Activated CD8-positive, alpha-beta T cell treated with anti-CD3 and anti-CD28 coated beads, Interleukin-2, amount 10 ng/mL, durations not matched to agents 7 days and 5 days (primary cell): ENCODE measurements at regions of chr2 and their contacts with region 1.

Region 1: GRCh38 chr2:178397002-178397605 is 53.9 kb downstream of the PRKRA start:
- DNase-seq: no peak
- ATAC-seq: peak; percentile 79
- H3K4me3 Mint-ChIP-seq: no peak overlapping the region
- H3K27ac Mint-ChIP-seq: no peak overlapping the region
- H3K4me1 Mint-ChIP-seq: peaks cover 4% of the 10 kb centered on the region
- H3K27me3 Mint-ChIP-seq: peaks cover 34% of the 10 kb centered on the region

Region 2: DNA sequence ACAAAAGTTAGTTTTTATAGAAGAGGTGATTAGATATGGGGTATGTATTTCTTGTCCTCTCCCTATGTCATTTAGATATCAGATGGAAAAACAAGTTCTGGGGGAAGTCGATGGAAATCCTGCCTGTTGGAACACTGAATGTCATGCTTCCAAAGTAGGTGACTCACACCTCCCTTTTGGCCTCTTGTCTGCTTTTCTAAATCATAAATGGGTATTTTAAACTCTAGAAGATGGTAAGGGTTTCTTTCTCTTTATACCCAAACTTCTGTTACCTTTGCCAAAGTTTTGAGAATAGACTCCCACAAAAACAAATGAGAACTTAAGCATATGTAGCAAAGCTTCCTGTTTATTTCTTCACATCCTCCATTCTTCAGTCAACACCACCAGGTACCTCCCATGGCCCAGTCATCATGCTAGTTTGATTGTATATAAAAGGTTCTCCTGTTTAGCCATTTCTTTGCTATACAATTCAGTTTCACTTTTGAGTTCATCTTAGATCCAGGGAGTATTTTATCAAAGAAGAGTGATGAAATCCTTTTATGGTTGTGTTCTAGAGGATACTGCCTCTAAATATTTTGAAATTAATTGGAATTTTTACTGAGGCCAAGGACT is 10.0 kb before region 1 on chr2:
- CTCF ChIA-PET with region 1: interaction called, 10 read pairs
- POLR2A ChIA-PET with region 1: no interaction called
- DNase-seq: no peak
- ATAC-seq: no peak
- H3K4me3 Mint-ChIP-seq: no peak overlapping the region
- H3K27ac Mint-ChIP-seq: no peak overlapping the region
- H3K4me1 Mint-ChIP-seq: peaks cover 6% of the 10 kb centered on the region
- H3K27me3 Mint-ChIP-seq: peaks cover 10% of the 10 kb centered on the region

Region 3: DNA sequence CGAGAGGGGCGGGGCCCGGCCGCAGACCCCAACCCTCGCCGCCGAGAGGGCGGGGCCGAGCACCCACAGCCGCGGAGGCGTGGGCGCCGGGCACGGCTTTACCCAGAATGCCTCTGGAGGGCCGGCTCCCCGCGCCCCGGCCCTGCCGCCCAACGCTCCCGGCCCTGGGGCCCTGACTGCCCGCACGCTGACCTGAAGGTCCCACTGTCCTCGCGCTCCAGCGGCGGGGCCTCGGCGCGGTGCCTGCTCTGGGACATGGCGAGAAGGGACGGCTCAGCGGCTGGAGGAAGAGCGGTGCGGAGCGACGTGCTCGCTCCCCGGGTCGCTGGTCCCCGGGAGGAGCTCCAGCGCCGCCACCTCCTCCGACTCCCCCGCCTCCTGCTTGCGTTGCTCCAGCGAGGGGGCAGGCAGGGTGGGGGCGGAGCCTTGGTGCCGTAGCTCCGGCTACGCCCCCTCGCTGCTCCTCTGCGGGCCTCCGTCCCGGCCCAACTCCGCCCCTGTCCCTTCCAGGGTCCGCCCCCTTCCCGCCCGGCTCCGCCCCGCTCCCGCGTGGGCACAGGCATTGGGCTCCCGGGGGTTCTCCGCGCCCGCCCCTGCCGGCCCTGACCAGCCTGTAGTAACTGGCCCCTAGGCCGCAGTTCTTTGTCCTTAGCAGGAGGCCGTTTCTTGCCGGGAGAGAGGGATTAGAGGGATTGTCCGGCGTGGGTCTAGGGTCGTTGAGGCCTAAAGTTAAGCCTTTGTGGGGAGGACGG is 53.8 kb after region 1 on chr2 and contains the starts of genes PJVK and PRKRA:
- CTCF ChIA-PET with region 1: interaction called, 10 read pairs
- POLR2A ChIA-PET with region 1: interaction called, 3 read pairs
- DNase-seq: peak; percentile 96
- ATAC-seq: peak; percentile 92
- H3K4me3 Mint-ChIP-seq: peak within 1 kb of the TSS; percentile 88
- H3K27ac Mint-ChIP-seq: peak within 1 kb of the TSS; percentile 93
- H3K4me1 Mint-ChIP-seq: peaks cover 30% of the 10 kb centered on the region
- H3K27me3 Mint-ChIP-seq: peaks cover 3% of the 10 kb centered on the region
- total RNA-seq, gene PJVK: 0.50 to 0.99 TPM
- total RNA-seq, gene PRKRA: 41.2 to 41.8 TPM